Activated CD4-positive, alpha-beta T cell treated with anti-CD3 and anti-CD28 coated beads for 36 hours (primary cell): ENCODE measurements at regions of chr1 and their contacts with region 1.

Region 1: DNA sequence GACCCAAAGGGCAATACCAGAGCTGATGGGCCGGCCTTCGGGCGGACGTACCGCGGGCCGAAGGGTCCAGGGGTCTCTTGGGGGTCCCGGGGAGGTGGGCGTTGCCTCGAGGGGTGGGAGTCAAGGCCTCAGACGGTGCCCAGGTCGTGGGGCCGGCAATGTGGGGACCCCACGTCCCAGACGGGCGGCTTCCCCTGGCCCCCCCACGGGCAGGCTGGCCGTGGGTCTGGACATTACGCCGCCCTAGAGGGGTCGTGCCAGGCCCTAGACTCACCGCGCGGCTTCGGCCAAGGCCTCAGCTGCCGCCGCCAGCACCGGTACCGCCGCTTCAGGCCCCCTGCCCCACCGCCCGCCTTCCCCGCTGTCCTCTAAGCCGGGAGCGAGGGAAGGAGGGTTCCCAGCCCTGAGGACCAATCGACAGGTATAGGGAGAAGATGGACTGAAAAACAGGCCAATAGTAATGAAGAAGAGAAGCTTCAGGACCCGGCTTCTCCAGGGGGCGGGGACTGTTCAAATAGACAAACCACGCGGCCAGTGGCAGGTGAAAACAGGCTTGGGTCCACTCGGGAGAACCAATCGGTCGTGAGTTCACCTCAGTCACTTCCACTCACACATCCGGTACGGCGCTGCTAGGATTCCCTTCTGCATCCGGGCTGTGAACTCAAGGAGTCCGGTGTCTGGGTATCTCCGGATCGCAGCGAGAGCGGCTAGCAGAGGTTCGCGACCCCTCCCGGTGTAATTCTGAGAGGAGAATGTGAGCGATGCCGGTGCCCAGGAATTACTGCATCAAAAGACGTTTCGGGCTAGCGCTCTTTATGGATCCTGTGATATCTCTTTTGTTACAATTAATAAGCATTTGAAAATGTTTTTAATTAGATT is at the start of gene MTOR:
- DNase-seq: peak; percentile 98
- ATAC-seq: peak; percentile 98
- H3K4me3 Mint-ChIP-seq: peak within 1 kb of the TSS; percentile 90
- H3K27ac Mint-ChIP-seq: peak within 1 kb of the TSS; percentile 87
- H3K4me1 Mint-ChIP-seq: peaks cover 15% of the 10 kb centered on the region
- H3K27me3 Mint-ChIP-seq: no peaks in the 10 kb centered on the region
- total RNA-seq, gene MTOR: 32.3 to 36.3 TPM

Region 2: DNA sequence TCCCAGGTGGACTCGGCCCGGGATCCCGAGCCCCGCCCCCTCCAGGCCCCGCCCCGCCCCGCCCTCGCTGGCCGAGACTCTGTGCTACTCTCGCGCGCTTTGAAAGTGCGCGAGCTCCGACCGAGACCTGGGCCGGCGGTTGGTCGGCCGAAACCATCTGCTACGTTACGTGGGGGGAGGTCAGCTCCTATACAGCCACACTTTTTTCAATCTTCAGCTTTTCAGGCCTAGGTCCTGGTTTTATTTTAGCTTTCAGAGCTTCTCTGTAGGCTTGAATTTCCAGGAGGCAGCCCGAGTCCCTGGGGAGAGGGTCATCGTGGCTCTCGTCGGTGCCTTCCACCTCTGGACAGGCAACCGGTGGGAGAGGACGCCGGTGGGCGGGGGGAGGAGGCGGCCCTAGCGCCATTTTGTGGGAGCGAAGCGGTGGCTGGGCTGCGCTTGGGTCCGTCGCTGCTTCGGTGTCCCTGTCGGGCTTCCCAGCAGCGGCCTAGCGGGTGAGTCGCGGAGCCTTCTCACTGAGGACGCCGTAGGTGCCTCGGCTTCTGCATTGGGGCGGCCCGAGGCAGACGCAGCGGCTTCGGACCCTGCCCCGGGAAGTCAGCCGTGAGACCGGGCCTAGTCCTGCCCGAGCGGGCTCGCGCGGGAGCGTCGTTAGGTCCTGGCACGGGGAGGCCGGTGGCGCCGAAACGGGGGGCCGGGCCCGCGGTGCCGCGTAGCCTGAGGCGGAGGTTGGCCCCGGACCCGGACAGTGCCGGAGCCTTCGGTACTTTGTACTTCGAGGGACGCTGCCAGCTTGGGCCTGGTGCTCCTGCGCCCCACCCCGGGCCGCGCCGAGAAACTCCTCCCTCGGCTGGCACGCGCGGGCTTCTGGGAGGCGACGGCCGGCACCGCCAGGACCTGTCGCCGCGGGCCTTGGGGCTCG is 249.9 kb before region 1 on chr1 and contains the start of gene TARDBP:
- CTCF ChIA-PET with region 1: no interaction called
- POLR2A ChIA-PET with region 1: no interaction called
- intact Hi-C with region 1: loop called in 1 of 2 experiments (anchors 1 kb)
- DNase-seq: peak; percentile 94
- ATAC-seq: peak; percentile 89
- H3K4me3 Mint-ChIP-seq: peak within 1 kb of the TSS; percentile 93
- H3K27ac Mint-ChIP-seq: peak within 1 kb of the TSS; percentile 99
- H3K4me1 Mint-ChIP-seq: peaks cover 30% of the 10 kb centered on the region
- H3K27me3 Mint-ChIP-seq: no peaks in the 10 kb centered on the region
- total RNA-seq, gene TARDBP: 180 to 190 TPM

Region 3: GRCh38 chr1:11099310-11100149 is 162.9 kb before region 1 on chr1 and contains the start of gene EXOSC10:
- CTCF ChIA-PET with region 1: no interaction called
- POLR2A ChIA-PET with region 1: no interaction called
- intact Hi-C with region 1: loop called in 1 of 2 experiments (anchors 1 kb)
- DNase-seq: peak; percentile 97
- ATAC-seq: peak; percentile 98
- H3K4me3 Mint-ChIP-seq: peak within 1 kb of the TSS; percentile 95
- H3K27ac Mint-ChIP-seq: peak within 1 kb of the TSS; percentile 92
- H3K4me1 Mint-ChIP-seq: peaks cover 11% of the 10 kb centered on the region
- H3K27me3 Mint-ChIP-seq: no peaks in the 10 kb centered on the region
- total RNA-seq, gene EXOSC10: 74.3 to 89.6 TPM

Region 4: DNA sequence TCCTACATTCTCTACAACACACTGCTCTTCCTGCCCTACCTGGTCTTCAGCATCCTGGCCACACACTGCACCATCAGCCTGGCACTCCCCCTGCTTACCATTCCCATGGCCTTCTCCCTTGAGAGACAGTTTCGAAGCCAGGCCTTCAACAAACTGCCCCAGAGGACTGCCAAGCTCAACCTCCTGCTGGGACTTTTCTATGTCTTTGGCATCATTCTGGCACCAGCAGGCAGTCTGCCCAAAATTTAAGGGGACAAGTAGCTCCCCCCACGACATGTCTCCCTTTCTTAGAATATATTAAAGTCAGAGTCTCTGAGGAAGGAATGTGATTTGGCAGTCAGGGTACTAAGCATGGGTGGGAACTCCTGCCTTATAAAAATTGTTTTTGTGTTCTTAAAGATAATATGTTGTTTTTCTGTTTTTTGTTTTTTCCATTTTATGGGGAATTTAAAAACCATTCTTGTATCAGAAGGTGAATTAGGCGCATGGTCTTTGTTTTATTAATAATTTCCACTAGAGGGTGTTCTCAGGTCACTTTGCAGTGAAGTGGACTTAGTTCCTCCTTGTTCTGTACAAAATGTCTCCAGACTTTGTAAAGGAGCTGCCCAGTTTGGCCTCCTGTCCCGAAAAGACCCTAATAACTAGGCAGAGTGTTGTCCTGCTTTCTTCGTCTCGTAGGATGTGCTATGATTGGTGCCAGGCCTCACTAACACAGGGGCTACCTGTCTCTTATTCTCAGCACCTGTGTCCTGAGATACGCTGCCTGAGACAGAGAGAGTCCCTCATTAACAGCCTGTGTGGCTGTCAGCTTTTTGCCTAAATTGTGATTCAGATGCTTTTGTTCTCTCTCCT is 23.7 kb after region 1 on chr1:
- CTCF ChIA-PET with region 1: no interaction called
- POLR2A ChIA-PET with region 1: interaction called, 4 read pairs
- intact Hi-C with region 1: loop called in 1 of 2 experiments (anchors 2 kb)
- DNase-seq: no peak
- ATAC-seq: no peak
- H3K4me3 Mint-ChIP-seq: no peak overlapping the region
- H3K27ac Mint-ChIP-seq: peak overlapping the region; percentile 90
- H3K4me1 Mint-ChIP-seq: peaks cover 83% of the 10 kb centered on the region
- H3K27me3 Mint-ChIP-seq: no peaks in the 10 kb centered on the region

Region 5: DNA sequence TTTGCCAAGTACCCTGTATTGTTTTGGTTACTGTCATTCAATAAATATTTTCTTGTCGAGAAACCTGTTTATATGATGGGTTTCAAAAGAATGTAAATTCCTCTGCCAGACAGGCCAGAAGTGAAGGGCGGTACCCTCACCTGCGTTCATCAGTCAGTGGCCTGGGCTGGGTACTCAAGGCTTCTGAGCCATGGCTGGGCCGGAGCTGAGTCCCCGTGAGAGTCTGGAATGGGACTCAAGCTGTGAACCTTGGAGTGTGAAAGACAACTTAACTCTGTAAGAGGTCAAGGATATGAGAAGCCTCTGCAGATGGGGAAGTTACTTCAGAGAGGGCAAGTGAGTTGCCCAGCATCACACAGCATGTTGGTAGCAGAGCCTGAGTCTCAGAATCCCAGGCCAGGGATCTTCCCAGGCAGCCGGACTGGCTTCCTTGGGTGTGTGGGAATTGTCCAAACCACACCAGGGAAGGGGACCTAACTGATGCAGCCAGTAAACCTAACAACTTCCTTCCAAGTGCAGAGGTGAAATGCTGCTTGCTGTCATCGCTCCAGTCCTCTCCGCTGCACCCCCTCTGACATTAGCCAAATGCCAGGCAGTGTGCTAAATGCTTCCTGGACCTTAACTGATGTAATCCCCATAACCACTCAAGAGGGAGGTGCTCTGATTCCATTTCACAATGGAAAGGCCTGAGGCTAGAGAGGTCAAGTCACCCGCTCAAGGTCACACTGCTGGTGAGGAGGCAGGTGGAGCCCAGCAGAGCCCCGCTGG is 221.3 kb after region 1 on chr1:
- CTCF ChIA-PET with region 1: no interaction called
- POLR2A ChIA-PET with region 1: no interaction called
- intact Hi-C with region 1: no loop called
- DNase-seq: no peak
- ATAC-seq: no peak
- H3K4me3 Mint-ChIP-seq: no peak overlapping the region
- H3K27ac Mint-ChIP-seq: no peak overlapping the region
- H3K4me1 Mint-ChIP-seq: peaks cover 5% of the 10 kb centered on the region
- H3K27me3 Mint-ChIP-seq: peaks cover 32% of the 10 kb centered on the region

Region 6: GRCh38 chr1:11925938-11926292 is 663.5 kb after region 1 on chr1:
- CTCF ChIA-PET with region 1: no interaction called
- POLR2A ChIA-PET with region 1: no interaction called
- intact Hi-C with region 1: loop called in 1 of 2 experiments (anchors 1 kb)
- DNase-seq: no peak
- ATAC-seq: peak; percentile 21
- H3K4me3 Mint-ChIP-seq: peak overlapping the region; percentile 77
- H3K27ac Mint-ChIP-seq: no peak overlapping the region
- H3K4me1 Mint-ChIP-seq: peaks cover 30% of the 10 kb centered on the region
- H3K27me3 Mint-ChIP-seq: no peaks in the 10 kb centered on the region